Activated CD4-positive, alpha-beta T cell treated with anti-CD3 and anti-CD28 coated beads for 36 hours (primary cell): ENCODE measurements at regions of chr19 and their contacts with region 1.

Region 1: DNA sequence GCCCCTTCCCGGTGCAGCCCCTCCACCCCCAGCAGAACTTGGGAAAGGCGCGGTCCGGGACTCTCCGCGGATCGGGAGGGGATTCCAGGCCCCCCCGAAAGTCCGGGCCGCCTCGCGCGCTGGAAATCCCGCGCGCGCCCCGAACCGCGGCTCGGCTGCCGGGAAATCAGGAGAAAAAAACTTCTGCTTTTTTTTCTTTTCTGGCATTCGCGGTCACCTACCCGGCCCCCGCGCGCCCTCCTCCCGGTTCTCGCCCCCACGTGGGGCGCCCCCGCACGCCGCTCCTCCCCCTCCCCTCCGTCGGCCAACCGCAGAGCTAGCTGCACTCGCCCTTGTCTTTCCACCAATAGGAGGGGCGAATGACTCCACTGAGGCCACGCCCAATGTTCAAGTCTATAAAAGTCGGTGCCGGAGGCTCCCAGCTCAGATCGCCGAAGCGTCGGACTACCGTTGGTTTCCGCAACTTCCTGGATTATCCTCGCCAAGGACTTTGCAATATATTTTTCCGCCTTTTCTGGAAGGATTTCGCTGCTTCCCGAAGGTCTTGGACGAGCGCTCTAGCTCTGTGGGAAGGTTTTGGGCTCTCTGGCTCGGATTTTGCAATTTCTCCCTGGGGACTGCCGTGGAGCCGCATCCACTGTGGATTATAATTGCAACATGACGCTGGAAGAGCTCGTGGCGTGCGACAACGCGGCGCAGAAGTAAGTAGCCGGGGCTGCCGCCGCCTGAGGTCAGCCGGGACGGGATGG is at the start of gene GADD45B:
- DNase-seq: peak; percentile 98
- ATAC-seq: peak; percentile 53
- H3K4me3 Mint-ChIP-seq: peak within 1 kb of the TSS; percentile 94
- H3K27ac Mint-ChIP-seq: peak within 1 kb of the TSS; percentile 90
- H3K4me1 Mint-ChIP-seq: peaks cover 22% of the 10 kb centered on the region
- H3K27me3 Mint-ChIP-seq: no peaks in the 10 kb centered on the region
- total RNA-seq, gene GADD45B: 57.7 to 71.2 TPM

Region 2: DNA sequence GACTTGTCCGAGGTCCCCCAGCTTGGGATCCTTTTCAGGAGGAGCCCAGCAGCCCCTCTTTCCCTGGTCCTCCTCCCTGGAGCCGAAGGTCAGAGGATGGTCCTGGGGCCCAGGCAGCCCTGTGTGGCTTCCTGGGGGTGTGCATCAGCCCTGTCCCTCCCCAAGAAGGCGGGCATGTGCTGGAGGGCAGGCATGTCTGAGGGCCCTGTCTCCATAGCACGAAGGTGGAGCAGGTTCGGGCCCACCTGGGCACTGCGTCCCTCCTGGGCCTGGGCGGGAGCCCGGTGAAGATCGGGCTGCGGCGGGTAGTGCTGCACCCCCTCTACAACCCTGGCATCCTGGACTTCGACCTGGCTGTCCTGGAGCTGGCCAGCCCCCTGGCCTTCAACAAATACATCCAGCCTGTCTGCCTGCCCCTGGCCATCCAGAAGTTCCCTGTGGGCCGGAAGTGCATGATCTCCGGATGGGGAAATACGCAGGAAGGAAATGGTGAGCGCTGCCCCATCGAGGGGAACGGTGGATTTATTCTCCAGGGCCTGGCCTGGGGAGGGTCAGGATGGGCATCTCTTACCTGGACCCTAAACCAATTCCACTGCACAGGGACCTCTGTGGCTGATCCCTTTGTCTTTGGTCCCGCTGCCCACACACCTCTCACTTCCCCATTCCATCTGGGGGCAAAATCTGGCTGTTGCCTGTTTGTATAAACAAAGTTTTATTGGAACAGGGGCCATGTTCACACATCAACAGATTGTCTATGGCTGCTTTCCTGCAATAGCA is 59.4 kb before region 1 on chr19:
- CTCF ChIA-PET with region 1: no interaction called
- POLR2A ChIA-PET with region 1: no interaction called
- intact Hi-C with region 1: no loop called
- DNase-seq: no peak
- ATAC-seq: no peak
- H3K4me3 Mint-ChIP-seq: no peak overlapping the region
- H3K27ac Mint-ChIP-seq: no peak overlapping the region
- H3K4me1 Mint-ChIP-seq: no peaks in the 10 kb centered on the region
- H3K27me3 Mint-ChIP-seq: no peaks in the 10 kb centered on the region

Region 3: GRCh38 chr19:2427429-2428320 is 48.2 kb before region 1 on chr19 and contains the start of gene TIMM13:
- CTCF ChIA-PET with region 1: no interaction called
- POLR2A ChIA-PET with region 1: interaction called, 8 read pairs
- intact Hi-C with region 1: loop called in 1 of 2 experiments (anchors 1 kb)
- DNase-seq: peak; percentile 98
- ATAC-seq: peak; percentile 95
- H3K4me3 Mint-ChIP-seq: peak within 1 kb of the TSS; percentile 86
- H3K27ac Mint-ChIP-seq: peak within 1 kb of the TSS; percentile 96
- H3K4me1 Mint-ChIP-seq: peaks cover 5% of the 10 kb centered on the region
- H3K27me3 Mint-ChIP-seq: no peaks in the 10 kb centered on the region
- total RNA-seq, gene TIMM13: 70.7 to 104 TPM

Region 4: GRCh38 chr19:2507109-2507508 is 31.2 kb after region 1 on chr19:
- CTCF ChIA-PET with region 1: interaction called, 4 read pairs
- POLR2A ChIA-PET with region 1: interaction called, 15 read pairs
- intact Hi-C with region 1: loop called in 1 of 2 experiments (anchors 2 kb)
- DNase-seq: peak; percentile 57
- ATAC-seq: peak; percentile 68
- H3K4me3 Mint-ChIP-seq: no peak overlapping the region
- H3K27ac Mint-ChIP-seq: peak overlapping the region; percentile 72
- H3K4me1 Mint-ChIP-seq: peaks cover 26% of the 10 kb centered on the region
- H3K27me3 Mint-ChIP-seq: peaks cover 4% of the 10 kb centered on the region

Region 5: GRCh38 chr19:2561895-2562294 is 86.0 kb after region 1 on chr19:
- CTCF ChIA-PET with region 1: interaction called, 3 read pairs
- POLR2A ChIA-PET with region 1: interaction called, 11 read pairs
- intact Hi-C with region 1: no loop called
- DNase-seq: peak; percentile 88
- ATAC-seq: peak; percentile 92
- H3K4me3 Mint-ChIP-seq: peak overlapping the region; percentile 69
- H3K27ac Mint-ChIP-seq: peak overlapping the region; percentile 85
- H3K4me1 Mint-ChIP-seq: peaks cover 23% of the 10 kb centered on the region
- H3K27me3 Mint-ChIP-seq: peaks cover 2% of the 10 kb centered on the region

Region 6: DNA sequence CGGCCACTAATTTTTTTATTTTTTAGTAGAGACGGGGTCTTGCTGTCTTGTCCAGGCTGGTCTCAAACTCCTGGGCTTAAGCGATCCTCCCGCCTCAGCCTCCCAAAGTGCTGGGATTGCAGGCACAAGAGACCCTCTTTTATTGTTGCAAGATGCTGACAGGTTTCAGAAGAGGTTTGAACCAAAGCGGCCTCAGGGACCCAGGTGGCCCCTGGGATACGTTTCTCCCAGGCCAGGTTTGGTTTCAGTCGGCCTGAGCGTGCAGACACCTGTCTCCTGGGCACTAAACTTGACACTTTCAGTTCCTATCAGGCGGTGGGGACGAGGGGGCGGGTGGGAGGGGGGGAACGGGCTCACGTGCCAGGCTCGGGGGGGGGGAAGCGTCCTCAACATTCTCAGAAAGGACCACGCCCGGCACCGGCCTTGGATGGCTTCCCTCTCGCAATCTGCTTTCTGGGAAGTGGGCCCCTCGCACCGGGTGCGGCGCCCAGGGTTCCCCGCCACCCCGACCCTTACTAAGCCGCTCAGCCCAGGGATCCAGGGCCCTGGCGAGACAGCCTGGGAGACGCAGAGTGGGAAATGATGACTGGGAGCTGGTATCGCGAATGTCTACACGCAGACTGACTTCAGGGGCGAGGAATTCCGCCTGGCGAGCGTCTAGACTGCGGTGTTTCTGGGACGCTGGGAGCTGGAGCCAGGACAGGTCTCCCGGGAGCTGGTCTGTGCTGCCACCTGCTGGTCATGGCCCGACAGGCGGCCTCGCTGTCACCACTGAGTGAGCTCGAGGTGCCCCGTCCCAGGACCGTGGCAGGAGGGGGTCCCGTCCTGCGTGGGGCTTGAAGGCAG is 135.0 kb after region 1 on chr19:
- CTCF ChIA-PET with region 1: interaction called, 65 read pairs
- POLR2A ChIA-PET with region 1: interaction called, 106 read pairs
- intact Hi-C with region 1: loop called (anchors 1 kb)
- DNase-seq: peak; percentile 96
- ATAC-seq: peak; percentile 67
- H3K4me3 Mint-ChIP-seq: peak overlapping the region; percentile 71
- H3K27ac Mint-ChIP-seq: peak overlapping the region; percentile 83
- H3K4me1 Mint-ChIP-seq: peaks cover 53% of the 10 kb centered on the region
- H3K27me3 Mint-ChIP-seq: peaks cover 5% of the 10 kb centered on the region

Region 7: DNA sequence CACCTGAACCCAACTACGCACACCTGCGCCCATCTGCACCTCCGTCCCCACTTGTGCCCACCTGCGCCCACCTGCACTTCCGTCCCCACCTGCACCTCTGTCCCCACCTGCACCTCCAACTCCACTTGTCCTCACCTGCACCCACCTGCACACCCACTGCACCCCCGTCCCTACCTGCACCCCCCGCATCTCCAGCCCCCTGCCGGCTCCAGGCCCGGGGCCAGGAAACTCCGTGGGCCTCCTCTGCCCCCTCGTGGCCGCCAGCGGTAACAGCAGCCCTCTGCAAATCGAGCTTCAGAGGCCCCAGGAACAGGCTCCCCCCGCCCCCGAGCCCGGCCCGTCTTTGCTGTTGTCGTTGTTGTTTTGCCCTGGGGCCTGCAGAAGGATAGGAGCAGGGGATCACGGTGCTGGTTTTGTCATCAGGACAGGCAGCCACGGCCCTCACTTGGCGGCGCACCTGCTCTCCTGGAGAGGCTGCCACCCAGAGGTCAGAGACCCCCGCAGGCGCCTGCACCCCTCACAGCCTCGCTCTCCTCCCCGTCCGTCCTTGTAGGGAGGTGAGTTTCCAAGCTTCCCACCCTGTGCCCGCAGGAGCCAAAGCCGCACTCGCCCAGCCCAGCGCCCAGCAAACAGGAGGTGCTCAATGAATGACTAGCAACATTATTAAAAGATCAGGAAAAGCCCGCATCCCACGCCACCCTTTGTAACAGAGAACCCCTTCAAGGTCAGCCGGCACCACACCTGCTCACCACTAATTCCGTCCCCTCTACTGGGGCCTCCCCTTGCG is 161.2 kb after region 1 on chr19:
- CTCF ChIA-PET with region 1: interaction called, 10 read pairs
- POLR2A ChIA-PET with region 1: no interaction called
- intact Hi-C with region 1: loop called in 1 of 2 experiments (anchors 1 kb)
- DNase-seq: peak; percentile 87
- ATAC-seq: peak; percentile 81
- H3K4me3 Mint-ChIP-seq: no peak overlapping the region
- H3K27ac Mint-ChIP-seq: no peak overlapping the region
- H3K4me1 Mint-ChIP-seq: peaks cover 12% of the 10 kb centered on the region
- H3K27me3 Mint-ChIP-seq: peaks cover 4% of the 10 kb centered on the region